ENCODE measurements at regions of chr14 and their contacts with region 1.

Region 1: GRCh38 chr14:59964251-59965007 is 44.5 kb downstream of the LRRC9 start:
- DNase-seq: no peak
- ATAC-seq: peak in 2 of 4 donors; percentile 14 to 22
- H3K4me3 ChIP-seq: peak overlapping the region in 3 of 12 donors; percentile 19 to 64 (median 45)
- H3K27ac ChIP-seq: no peak overlapping the region
- H3K4me1 ChIP-seq: peaks cover 0 to 4% (median 0%) of the 10 kb centered on the region in 12 donors
- H3K27me3 ChIP-seq: no peaks in the 10 kb centered on the region
- CTCF ChIP-seq: no peak
- POLR2A ChIP-seq: no peak

Region 2: DNA sequence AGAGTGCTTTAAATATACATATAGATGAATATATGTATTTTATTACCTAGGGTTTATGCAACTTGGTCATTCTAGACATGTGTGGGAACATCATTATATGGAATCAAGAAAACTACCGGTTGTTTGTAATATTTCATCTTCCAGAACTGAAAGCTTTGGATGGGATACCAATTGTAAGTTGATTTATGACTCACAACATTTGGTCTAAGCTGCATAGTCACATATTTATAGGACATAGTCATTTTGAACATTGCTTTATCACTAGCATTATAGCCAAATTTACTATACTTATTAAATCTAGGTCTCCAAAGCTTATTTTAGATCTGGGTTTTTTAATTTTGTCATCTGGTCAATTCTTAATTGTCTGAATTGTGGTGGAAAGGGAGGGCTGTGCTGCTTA is 43.6 kb after region 1 on chr14:
- intact Hi-C with region 1: no loop called
- DNase-seq: no peak
- ATAC-seq: no peak
- H3K4me3 ChIP-seq: no peak overlapping the region
- H3K27ac ChIP-seq: no peak overlapping the region
- H3K4me1 ChIP-seq: peaks cover 0 to 7% (median 0%) of the 10 kb centered on the region in 12 donors
- H3K27me3 ChIP-seq: no peaks in the 10 kb centered on the region
- CTCF ChIP-seq: no peak
- POLR2A ChIP-seq: no peak

Region 3: DNA sequence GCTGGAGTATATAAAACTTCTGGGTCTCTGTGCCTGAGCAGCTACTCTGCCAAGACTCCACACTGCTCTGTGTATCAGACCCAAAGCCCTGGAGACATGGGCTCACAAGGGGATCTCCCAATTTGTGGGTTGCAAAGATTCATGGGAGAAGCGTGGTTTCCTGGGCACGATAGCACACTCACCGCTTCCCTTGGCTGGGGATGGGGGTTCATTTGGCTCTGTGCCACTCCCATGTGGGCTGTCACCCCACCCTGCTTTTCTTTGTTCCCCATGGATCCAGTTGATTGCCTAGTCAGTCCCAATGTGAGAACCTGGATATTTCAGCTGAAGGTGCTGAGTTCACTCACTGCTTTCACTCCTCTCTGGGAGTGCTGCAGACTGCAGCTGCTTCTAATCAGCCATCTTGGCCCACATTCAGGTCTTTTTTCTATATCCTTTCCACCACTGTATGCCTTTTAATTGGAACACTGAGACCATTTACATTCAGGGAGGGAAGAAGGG is 87.3 kb after region 1 on chr14:
- intact Hi-C with region 1: loop called in 1 of 10 experiments (anchors 10 kb)
- DNase-seq: peak in 1 of 5 donors; percentile 27
- ATAC-seq: no peak
- H3K4me3 ChIP-seq: no peak overlapping the region
- H3K27ac ChIP-seq: no peak overlapping the region
- H3K4me1 ChIP-seq: peaks cover 0 to 8% (median 0%) of the 10 kb centered on the region in 12 donors
- H3K27me3 ChIP-seq: no peaks in the 10 kb centered on the region
- CTCF ChIP-seq: no peak
- POLR2A ChIP-seq: no peak

Region 4: GRCh38 chr14:60064491-60065072 is 100.2 kb after region 1 on chr14:
- intact Hi-C with region 1: loop called in 6 of 10 experiments (anchors 10 kb)
- DNase-seq: no peak
- ATAC-seq: no peak
- H3K4me3 ChIP-seq: no peak overlapping the region
- H3K27ac ChIP-seq: no peak overlapping the region
- H3K4me1 ChIP-seq: no peaks in the 10 kb centered on the region
- H3K27me3 ChIP-seq: no peaks in the 10 kb centered on the region
- CTCF ChIP-seq: peak; percentile 38 to 78 (median 66)
- POLR2A ChIP-seq: no peak

Measured in heart left ventricle (tissue), 16 donors.